CD4-positive, alpha-beta memory T cell (primary cell): ENCODE measurements at regions of chr18 and their contacts with region 1.

Region 1: GRCh38 chr18:2985628-2986027 is 27.3 kb downstream of the LPIN2 start:
- DNase-seq: peak; percentile 47 to 71 (median 69)
- H3K4me3 ChIP-seq: no peak overlapping the region
- H3K4me3 Mint-ChIP-seq: peak overlapping the region in 1 of 8 donors; percentile 44
- H3K27ac ChIP-seq: no peak overlapping the region
- H3K27ac Mint-ChIP-seq: peak overlapping the region in 4 of 7 donors; percentile 15 to 90 (median 39)
- H3K4me1 ChIP-seq: peaks cover 51% of the 10 kb centered on the region
- H3K4me1 Mint-ChIP-seq: peaks cover 34 to 78% (median 50%) of the 10 kb centered on the region in 4 donors
- H3K27me3 ChIP-seq: no peaks in the 10 kb centered on the region
- H3K27me3 Mint-ChIP-seq: no peaks in the 10 kb centered on the region

Region 2: DNA sequence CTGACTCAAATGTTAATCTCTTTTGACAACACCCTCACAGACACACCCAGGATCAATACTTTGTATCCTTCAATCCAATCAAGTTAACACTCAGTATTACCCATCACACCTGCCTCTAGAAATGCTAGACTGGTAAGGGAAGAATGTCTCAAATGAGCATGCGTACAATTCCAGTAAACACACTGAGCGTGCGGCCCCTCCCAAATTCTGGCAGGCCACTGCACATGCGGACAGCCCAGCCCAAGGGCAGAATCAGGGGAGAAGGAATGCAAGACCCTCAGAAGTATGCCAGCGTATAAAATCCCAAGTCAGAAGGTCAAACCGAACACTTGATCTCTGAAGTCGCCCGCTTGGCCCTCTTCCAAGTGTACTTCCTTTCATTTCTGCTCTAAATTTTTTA is 146.4 kb before region 1 on chr18:
- CTCF ChIA-PET with region 1: no interaction called
- POLR2A ChIA-PET with region 1: no interaction called
- intact Hi-C with region 1: no loop called
- DNase-seq: no peak
- H3K4me3 ChIP-seq: no peak overlapping the region
- H3K4me3 Mint-ChIP-seq: no peak overlapping the region
- H3K27ac ChIP-seq: no peak overlapping the region
- H3K27ac Mint-ChIP-seq: no peak overlapping the region
- H3K4me1 ChIP-seq: no peaks in the 10 kb centered on the region
- H3K4me1 Mint-ChIP-seq: no peaks in the 10 kb centered on the region
- H3K27me3 ChIP-seq: no peaks in the 10 kb centered on the region
- H3K27me3 Mint-ChIP-seq: peaks cover 0 to 3% of the 10 kb centered on the region in 2 donors

Region 3: DNA sequence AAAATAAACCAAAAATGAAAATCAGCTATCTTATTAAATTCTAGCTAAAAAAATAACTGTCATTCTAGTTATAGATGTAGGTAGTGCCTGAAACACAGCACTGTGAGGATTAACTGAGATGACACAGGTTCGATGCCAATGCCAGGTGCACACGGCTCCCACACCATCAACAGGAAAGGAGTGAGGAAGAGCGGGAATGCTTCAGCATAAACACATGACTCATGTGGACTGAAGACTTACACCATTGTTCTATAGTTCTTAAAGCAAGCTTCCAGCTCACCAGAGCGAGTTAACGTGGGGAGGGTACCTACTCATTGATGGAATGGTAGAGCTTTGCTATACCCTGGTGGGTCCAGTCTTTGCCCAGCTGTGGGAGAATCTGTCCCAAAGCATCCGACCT is 62.2 kb before region 1 on chr18:
- CTCF ChIA-PET with region 1: interaction called, 263 read pairs
- POLR2A ChIA-PET with region 1: interaction called, 5 read pairs
- intact Hi-C with region 1: no loop called
- DNase-seq: no peak
- H3K4me3 ChIP-seq: no peak overlapping the region
- H3K4me3 Mint-ChIP-seq: no peak overlapping the region
- H3K27ac ChIP-seq: no peak overlapping the region
- H3K27ac Mint-ChIP-seq: peak overlapping the region in 1 of 7 donors; percentile 51
- H3K4me1 ChIP-seq: no peaks in the 10 kb centered on the region
- H3K4me1 Mint-ChIP-seq: peaks cover 0 to 2% (median 0%) of the 10 kb centered on the region in 4 donors
- H3K27me3 ChIP-seq: no peaks in the 10 kb centered on the region
- H3K27me3 Mint-ChIP-seq: no peaks in the 10 kb centered on the region

Region 4: DNA sequence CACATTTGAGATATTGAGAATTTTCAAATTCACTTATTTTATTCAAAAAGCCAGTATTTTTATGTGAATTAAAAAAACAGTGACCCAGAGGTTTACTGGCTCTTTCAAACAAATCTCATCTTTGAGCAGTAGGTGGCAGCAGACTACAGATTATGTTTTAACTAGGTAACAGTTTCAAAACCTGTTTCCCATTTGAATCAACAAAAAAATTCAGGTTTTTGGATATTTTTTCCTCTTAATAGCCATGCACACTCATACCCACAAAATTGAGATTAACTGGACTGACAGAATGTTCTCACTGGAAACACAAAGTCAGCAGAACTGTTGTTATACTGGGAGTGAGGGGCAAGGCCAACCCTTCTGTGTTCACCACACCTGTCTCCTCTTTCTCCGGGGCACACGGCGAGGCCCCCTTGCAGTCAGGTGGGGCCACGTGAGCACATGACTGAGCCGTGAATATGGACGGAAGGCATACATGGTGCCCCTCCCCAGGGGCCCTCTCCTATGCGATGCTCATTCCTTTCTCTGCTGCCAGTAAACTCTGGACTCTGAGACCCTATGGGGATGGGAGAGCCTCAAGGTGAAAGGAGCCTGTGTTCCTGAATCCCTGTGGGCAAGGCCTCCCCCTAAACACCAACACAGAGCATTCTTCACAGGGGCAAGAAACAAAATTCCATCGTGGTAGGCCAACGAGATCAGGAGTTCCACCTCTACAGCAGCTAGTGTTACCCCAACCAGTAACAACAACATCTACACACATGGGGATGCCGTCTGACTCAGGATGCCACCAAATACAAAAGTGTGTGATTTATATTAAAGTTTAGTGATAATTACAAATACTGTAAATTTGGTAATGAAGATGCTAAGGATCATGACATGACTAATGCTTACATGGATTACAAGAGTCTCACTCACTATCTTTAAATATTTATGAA is 53.1 kb before region 1 on chr18:
- CTCF ChIA-PET with region 1: interaction called, 263 read pairs
- POLR2A ChIA-PET with region 1: interaction called, 49 read pairs
- intact Hi-C with region 1: loop called (anchors 1 kb)
- DNase-seq: peak; percentile 59 to 79 (median 73)
- H3K4me3 ChIP-seq: no peak overlapping the region
- H3K4me3 Mint-ChIP-seq: peak overlapping the region in 6 of 8 donors; percentile 18 to 64 (median 44)
- H3K27ac ChIP-seq: peak overlapping the region; percentile 56
- H3K27ac Mint-ChIP-seq: peak overlapping the region; percentile 83 to 94 (median 89)
- H3K4me1 ChIP-seq: peaks cover 36% of the 10 kb centered on the region
- H3K4me1 Mint-ChIP-seq: peaks cover 29 to 43% (median 37%) of the 10 kb centered on the region in 4 donors
- H3K27me3 ChIP-seq: no peaks in the 10 kb centered on the region
- H3K27me3 Mint-ChIP-seq: no peaks in the 10 kb centered on the region

Region 5: GRCh38 chr18:2948038-2948437 is 37.6 kb before region 1 on chr18:
- CTCF ChIA-PET with region 1: interaction called, 104 read pairs
- POLR2A ChIA-PET with region 1: interaction called, 1,352 read pairs
- intact Hi-C with region 1: no loop called
- DNase-seq: no peak
- H3K4me3 ChIP-seq: no peak overlapping the region
- H3K4me3 Mint-ChIP-seq: no peak overlapping the region
- H3K27ac ChIP-seq: no peak overlapping the region
- H3K27ac Mint-ChIP-seq: peak overlapping the region in 2 of 7 donors; percentile 41 to 57
- H3K4me1 ChIP-seq: peaks cover 39% of the 10 kb centered on the region
- H3K4me1 Mint-ChIP-seq: peaks cover 33 to 66% (median 51%) of the 10 kb centered on the region in 4 donors
- H3K27me3 ChIP-seq: no peaks in the 10 kb centered on the region
- H3K27me3 Mint-ChIP-seq: no peaks in the 10 kb centered on the region

Region 6: GRCh38 chr18:2971741-2972552 is 13.7 kb before region 1 on chr18:
- CTCF ChIA-PET with region 1: interaction called, 304 read pairs
- POLR2A ChIA-PET with region 1: interaction called, 1,352 read pairs
- intact Hi-C with region 1: loop called (anchors 1 kb)
- DNase-seq: peak; percentile 66 to 91 (median 72)
- H3K4me3 ChIP-seq: peak overlapping the region; percentile 34 to 37
- H3K4me3 Mint-ChIP-seq: peak overlapping the region; percentile 82 to 94 (median 88)
- H3K27ac ChIP-seq: peak overlapping the region; percentile 79
- H3K27ac Mint-ChIP-seq: peak overlapping the region; percentile 88 to 98 (median 96)
- H3K4me1 ChIP-seq: peaks cover 100% of the 10 kb centered on the region
- H3K4me1 Mint-ChIP-seq: peaks cover 72 to 96% (median 86%) of the 10 kb centered on the region in 4 donors
- H3K27me3 ChIP-seq: no peaks in the 10 kb centered on the region
- H3K27me3 Mint-ChIP-seq: no peaks in the 10 kb centered on the region

Region 7: DNA sequence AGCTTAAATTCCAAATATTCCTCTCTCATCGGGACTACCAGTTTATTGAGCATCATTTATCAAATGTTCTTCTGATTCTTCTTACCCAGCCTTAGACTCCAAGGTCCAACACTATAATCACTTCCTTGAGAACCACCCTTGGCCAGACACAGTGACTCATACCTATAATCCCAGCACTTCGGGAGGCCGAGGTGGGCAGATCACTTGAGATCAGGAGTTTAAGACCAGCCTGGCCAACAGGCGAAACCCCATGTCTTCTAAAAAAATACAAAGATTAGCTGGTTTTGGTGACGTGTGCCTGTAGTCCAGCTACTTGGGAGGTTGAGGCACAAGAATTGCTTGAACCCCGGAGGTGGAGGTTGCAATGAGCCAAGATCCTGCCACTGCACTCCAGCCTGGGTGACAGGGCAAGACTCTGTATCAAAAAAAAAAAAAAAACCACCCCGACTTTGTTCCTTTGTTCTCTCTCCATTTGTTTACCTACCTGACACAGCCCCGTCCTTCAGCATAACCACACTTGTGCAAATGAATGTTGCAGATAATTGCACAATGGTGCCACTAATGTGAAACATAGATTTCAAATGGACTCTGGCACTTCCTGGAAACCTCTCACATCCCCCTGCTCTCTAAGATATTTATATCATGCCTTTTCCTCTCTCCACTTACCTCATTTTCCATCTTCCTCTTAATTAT is 66.2 kb after region 1 on chr18:
- CTCF ChIA-PET with region 1: no interaction called
- POLR2A ChIA-PET with region 1: no interaction called
- intact Hi-C with region 1: no loop called
- DNase-seq: peak in 1 of 5 donors; percentile 11
- H3K4me3 ChIP-seq: no peak overlapping the region
- H3K4me3 Mint-ChIP-seq: peak overlapping the region; percentile 15 to 78 (median 42)
- H3K27ac ChIP-seq: no peak overlapping the region
- H3K27ac Mint-ChIP-seq: peak overlapping the region; percentile 12 to 91 (median 82)
- H3K4me1 ChIP-seq: peaks cover 33% of the 10 kb centered on the region
- H3K4me1 Mint-ChIP-seq: peaks cover 27 to 38% (median 32%) of the 10 kb centered on the region in 4 donors
- H3K27me3 ChIP-seq: no peaks in the 10 kb centered on the region
- H3K27me3 Mint-ChIP-seq: no peaks in the 10 kb centered on the region